Activated B cell treated with CpG ODN at 0.5 μM for 24 hours (primary cell): ENCODE measurements at regions of chr6 and their contacts with region 1.

Region 1: DNA sequence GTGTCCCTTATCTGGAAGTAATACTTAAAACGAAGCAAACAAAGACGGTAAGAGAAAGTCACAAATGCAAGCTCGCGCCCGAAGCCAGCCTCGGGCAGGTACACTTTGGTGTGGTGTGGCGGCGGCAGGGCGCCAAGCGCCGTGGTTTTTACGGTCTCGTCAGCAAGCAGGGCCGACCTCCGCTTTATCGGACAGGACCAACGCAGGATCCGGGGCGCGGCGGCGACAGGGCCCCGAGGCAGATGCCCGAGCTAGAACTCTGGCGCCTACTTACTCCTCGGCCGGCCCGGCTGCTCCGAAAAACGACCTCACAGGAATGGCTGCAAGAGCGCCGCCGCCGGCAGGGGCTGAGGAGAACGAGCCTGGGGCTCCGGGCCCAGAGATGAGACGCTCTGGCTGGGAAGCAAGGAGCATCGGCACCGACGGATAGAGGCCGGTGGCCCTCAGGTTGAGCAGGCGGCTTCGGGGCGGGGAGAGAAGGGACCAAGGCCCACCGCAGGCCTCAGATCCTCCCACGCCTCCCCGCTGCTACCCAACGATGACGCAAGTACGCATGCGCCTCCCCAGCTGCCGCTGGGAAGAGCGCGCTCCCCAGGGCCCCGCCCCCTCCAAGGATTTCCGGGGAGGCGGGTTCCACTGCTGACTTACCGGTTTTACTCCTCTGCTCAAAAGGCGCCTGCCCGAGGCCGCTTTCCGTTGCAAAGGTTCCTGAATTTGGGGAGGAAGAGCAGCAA is 60.6 kb downstream of the FAM217A start:
- DNase-seq: peak; percentile 92
- ATAC-seq: peak; percentile 68
- H3K4me3 Mint-ChIP-seq: peak overlapping the region; percentile 95
- H3K27ac Mint-ChIP-seq: peak overlapping the region; percentile 99
- H3K4me1 Mint-ChIP-seq: peaks cover 68% of the 10 kb centered on the region
- H3K27me3 Mint-ChIP-seq: no peaks in the 10 kb centered on the region
- CTCF ChIP-seq: no peak

Region 2: DNA sequence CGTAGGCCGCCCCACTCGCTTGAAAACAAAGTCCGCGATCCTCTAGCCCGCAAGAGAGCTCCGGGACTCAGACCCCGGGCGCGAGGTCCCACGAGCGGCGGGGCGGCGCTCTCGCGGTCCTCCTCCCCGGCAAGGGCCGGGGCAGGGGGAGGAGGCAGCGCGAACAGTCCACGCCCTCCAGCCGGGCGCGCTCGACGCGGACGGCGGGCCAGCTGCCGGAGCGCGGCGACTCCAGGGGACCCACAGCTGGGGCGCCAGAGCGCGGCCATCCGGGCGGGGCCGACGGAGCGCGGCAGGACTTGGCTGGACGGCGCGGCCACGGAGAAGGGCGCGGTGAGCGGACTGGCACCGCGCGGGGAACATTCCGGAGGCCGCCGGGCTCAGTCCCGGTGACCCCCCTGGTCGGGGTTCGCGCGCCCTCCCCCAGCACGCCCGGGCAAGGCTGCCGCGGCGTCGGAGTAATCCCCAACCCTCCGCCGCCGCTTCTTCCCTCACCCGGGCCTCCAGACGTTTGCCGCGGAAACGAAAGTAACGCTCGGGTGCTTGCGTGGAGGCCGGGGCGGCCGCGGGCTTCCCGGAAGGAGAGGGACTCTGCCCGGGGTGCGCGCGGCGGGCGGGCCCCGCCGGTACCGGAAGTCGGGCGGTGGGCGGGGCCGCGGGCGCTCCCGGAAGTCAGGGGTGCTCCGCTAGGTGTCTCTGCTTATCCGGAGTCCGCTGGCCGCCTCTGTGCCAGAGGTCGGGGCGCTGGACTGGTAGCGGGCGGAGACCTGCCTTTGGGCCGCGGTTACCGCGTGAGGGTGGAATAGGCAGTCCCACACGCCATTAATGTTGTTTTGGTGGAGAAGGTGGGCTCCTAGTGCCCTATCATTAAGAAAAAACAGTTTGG is 949.8 kb before region 1 on chr6 and contains the start of gene RIPK1:
- CTCF ChIA-PET with region 1: interaction called, 3 read pairs
- POLR2A ChIA-PET with region 1: interaction called, 5 read pairs
- intact Hi-C with region 1: loop called (anchors 2 kb)
- DNase-seq: peak; percentile 98
- ATAC-seq: peak; percentile 74
- H3K4me3 Mint-ChIP-seq: peak within 1 kb of the TSS; percentile 93
- H3K27ac Mint-ChIP-seq: peak within 1 kb of the TSS; percentile 94
- H3K4me1 Mint-ChIP-seq: peaks cover 38% of the 10 kb centered on the region
- H3K27me3 Mint-ChIP-seq: no peaks in the 10 kb centered on the region
- CTCF ChIP-seq: no peak
- total RNA-seq, gene RIPK1: 20.5 and 21.8 TPM in 2 replicates

Region 3: GRCh38 chr6:3162565-3163247 is 855.6 kb before region 1 on chr6:
- CTCF ChIA-PET with region 1: no interaction called
- POLR2A ChIA-PET with region 1: no interaction called
- intact Hi-C with region 1: loop called (anchors 1 kb)
- DNase-seq: peak; percentile 70
- ATAC-seq: peak; percentile 82
- H3K4me3 Mint-ChIP-seq: peak overlapping the region; percentile 87
- H3K27ac Mint-ChIP-seq: peak overlapping the region; percentile 69
- H3K4me1 Mint-ChIP-seq: peaks cover 28% of the 10 kb centered on the region
- H3K27me3 Mint-ChIP-seq: peaks cover 2% of the 10 kb centered on the region
- CTCF ChIP-seq: no peak

Region 4: DNA sequence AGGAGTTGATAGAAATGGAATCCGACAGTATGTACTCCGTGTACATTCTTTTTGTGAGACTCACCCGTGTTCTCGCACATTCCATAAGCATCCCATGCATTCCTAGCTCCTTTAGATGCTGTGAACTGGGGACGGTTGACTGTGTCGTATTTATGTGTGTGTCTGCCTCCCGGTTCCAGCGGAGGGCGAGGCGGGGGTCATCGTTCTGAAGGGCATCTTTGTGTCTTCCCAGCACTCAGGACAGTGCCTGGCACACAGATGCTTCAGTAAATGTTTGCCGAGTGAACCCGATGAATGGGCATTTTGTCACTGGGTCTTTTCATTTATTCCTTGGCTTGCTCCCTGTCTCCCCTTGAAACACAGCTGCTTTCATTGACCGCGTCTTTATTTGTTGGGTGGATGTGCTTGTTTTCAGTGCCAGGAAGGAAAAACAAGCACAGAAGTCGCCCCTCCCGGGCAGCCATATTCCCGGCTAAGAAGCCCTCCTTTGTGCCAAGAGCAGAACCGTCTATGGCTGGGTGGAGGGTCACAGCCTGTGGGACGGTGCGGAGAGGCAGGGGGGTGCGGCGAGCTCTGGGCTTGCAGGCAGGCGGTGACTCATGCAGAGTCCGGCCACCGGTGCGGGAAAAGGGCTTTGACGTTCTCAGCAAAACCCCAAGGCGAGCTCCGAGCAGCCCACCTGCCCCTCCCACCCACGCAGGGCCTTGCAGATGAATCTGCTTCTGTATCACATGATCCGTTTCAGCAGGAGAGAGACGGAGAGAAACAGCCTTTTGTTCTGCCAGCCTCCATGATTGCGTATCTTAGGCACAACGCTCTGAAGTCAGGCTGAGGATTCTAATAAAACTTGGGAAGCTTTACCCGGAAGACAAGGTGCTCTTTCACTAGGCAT is 770.8 kb before region 1 on chr6:
- CTCF ChIA-PET with region 1: no interaction called
- POLR2A ChIA-PET with region 1: no interaction called
- intact Hi-C with region 1: no loop called
- DNase-seq: no peak
- ATAC-seq: no peak
- H3K4me3 Mint-ChIP-seq: no peak overlapping the region
- H3K27ac Mint-ChIP-seq: no peak overlapping the region
- H3K4me1 Mint-ChIP-seq: peaks cover 6% of the 10 kb centered on the region
- H3K27me3 Mint-ChIP-seq: peaks cover 52% of the 10 kb centered on the region
- CTCF ChIP-seq: no peak

Region 5: DNA sequence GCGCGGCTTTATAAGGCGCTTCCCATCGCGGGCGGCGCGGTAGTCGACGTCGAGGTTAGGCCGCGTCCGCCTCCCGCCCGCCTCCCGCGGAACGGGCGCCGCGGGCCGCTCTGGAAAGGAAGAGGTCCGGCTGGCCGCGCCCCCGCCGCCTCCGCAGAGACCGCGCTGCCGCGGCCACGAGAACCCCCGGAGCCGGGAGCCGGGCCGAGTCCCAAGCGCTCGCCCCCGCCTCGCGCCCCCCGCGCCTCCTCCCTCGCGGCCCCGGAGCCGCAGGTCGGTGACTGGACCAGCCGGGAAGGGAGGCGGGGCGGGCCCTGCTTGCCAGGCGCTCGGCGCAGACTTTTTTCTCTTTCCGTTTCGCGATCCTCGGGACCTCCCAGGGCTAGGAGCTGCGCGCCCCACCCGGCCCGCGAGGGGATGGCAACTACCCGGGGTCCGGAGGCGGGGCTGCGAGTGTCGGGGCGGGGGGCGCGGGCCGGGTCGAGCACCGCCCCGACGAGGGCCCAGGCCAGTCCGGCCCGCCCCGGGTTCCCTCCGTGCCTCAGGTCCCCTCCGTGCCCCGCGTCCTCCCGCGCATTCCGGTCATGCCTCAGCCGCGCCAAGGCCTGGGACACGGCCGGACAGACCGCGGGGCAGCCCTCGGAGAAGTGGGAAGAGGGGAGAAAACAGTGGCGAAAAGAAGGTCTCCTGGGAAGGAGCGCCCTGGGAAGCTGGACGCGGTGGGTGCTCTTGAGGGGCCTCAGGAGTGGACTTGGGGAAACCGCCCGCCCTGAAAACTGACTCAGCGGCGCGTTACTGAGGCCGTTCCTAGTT is 266.4 kb before region 1 on chr6:
- CTCF ChIA-PET with region 1: interaction called, 3 read pairs
- POLR2A ChIA-PET with region 1: interaction called, 24 read pairs
- intact Hi-C with region 1: no loop called
- DNase-seq: peak; percentile 72
- ATAC-seq: peak; percentile 73
- H3K4me3 Mint-ChIP-seq: peak overlapping the region; percentile 72
- H3K27ac Mint-ChIP-seq: no peak overlapping the region
- H3K4me1 Mint-ChIP-seq: peaks cover 52% of the 10 kb centered on the region
- H3K27me3 Mint-ChIP-seq: no peaks in the 10 kb centered on the region
- CTCF ChIP-seq: no peak

Region 6: DNA sequence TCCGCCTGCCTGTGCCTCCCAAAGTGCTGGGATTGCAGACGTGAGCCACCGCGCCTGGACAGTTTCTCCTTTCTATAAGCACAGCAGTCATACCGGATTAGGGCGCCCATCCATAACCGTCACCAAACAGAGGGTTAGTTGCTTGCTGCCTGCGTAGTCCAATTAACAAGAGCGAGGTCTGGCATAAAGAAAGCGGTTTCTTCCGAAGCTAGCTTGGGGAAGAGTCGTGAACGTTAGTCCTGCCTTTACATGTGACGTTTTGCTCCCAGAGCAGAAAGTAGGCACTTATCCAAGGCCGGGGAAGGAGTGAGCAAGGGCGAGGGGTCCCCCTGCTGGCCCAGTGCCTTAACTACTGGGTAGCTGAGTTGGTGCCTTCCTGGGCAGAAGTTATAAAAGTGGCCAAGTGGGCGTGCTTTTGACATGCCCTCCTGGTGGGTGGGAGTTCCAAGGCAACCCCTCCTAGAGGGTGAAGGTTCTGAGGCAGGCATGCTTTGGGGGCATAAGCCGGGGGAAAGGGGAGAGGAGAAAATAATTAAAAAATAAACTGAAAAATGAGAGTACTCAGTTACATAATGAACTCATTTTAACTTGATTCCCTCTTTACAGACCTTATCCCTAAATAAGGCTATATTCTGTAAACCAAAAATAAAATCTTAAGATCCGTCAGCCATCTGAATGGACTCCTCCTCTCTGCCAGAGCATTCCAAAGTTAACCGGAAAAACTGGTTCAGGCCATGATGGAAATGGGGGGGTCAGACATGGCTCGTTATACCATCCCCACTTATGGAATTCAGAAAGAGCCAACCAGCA is 27.4 kb before region 1 on chr6:
- CTCF ChIA-PET with region 1: interaction called, 3 read pairs
- POLR2A ChIA-PET with region 1: interaction called, 13 read pairs
- intact Hi-C with region 1: loop called (anchors 1 kb)
- DNase-seq: peak; percentile 59
- ATAC-seq: peak; percentile 95
- H3K4me3 Mint-ChIP-seq: no peak overlapping the region
- H3K27ac Mint-ChIP-seq: no peak overlapping the region
- H3K4me1 Mint-ChIP-seq: peaks cover 9% of the 10 kb centered on the region
- H3K27me3 Mint-ChIP-seq: no peaks in the 10 kb centered on the region
- CTCF ChIP-seq: no peak

Region 7: GRCh38 chr6:4155848-4156466 is 137.6 kb after region 1 on chr6:
- CTCF ChIA-PET with region 1: interaction called, 16 read pairs
- POLR2A ChIA-PET with region 1: interaction called, 12 read pairs
- intact Hi-C with region 1: loop called (anchors 1 kb)
- DNase-seq: no peak
- ATAC-seq: peak; percentile 84
- H3K4me3 Mint-ChIP-seq: no peak overlapping the region
- H3K27ac Mint-ChIP-seq: peak overlapping the region; percentile 5
- H3K4me1 Mint-ChIP-seq: peaks cover 34% of the 10 kb centered on the region
- H3K27me3 Mint-ChIP-seq: no peaks in the 10 kb centered on the region
- CTCF ChIP-seq: peak; percentile 68

Region 8: DNA sequence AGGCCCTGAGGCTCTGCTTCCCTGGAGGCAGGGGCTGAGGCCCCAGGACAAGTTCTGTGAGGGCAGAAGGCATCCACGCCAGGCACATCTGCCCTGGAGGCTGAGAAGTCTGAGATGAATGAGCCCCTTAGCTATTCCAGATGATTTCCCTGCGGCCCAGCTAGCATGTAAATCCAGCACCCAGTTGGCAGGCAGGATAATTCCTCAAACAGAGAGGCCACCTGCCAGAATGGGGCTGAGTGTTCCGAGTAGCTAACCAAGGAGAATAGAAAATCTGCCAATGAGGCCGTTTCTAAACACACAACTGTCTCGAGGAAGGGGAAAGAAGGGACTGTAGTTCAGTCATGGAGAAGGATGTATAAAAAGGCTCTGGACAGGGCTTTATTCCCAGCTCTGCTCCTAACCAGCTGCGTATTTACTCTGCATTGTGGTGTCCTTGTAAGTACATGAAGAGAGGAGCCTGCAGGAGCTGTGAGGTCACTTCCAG is 546.5 kb after region 1 on chr6:
- CTCF ChIA-PET with region 1: no interaction called
- POLR2A ChIA-PET with region 1: no interaction called
- intact Hi-C with region 1: no loop called
- DNase-seq: no peak
- ATAC-seq: no peak
- H3K4me3 Mint-ChIP-seq: no peak overlapping the region
- H3K27ac Mint-ChIP-seq: no peak overlapping the region
- H3K4me1 Mint-ChIP-seq: no peaks in the 10 kb centered on the region
- H3K27me3 Mint-ChIP-seq: peaks cover 21% of the 10 kb centered on the region
- CTCF ChIP-seq: no peak